CD8-positive, alpha-beta T cell (primary cell): ENCODE measurements at regions of chr16 and their contacts with region 1.

Region 1: DNA sequence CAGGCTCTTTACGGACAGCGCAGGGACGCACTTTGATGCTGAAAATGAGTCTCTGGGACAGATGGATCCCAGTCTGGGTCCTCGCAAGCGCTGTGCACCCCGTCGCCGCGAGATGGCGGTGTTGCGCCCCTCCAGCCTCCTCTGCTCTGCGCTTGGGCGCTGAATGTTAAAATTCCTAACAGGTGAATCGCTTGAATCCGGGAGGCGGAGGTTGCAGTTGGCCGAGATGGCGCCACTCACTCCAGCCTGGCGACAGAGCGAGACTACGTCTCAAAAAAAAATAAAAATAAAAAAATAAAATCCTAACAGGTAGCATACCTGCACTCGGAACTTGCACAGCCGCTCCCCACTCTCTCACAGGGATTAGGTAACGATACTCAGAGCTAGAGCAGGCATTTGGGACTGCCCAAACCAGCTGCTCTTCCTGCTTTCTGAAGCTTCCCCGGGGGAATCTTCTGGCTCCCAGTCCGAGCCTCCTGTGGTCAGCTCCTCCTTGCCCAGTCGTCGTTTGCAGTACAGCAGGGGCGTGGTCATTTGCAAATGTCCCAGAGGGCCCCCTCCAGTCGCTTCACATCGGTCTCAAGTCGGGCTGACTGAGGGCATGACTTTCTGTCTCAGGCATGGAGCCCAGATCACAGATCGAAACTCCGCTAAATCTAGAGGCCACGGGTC is 26.2 kb upstream of the OSGIN1 start:
- DNase-seq: peak; percentile 28 to 70 (median 56)
- ATAC-seq: peak; percentile 72
- H3K4me3 ChIP-seq: no peak overlapping the region
- H3K4me3 Mint-ChIP-seq: no peak overlapping the region
- H3K27ac ChIP-seq: no peak overlapping the region
- H3K27ac Mint-ChIP-seq: no peak overlapping the region
- H3K4me1 ChIP-seq: no peaks in the 10 kb centered on the region
- H3K4me1 Mint-ChIP-seq: peaks cover 4% of the 10 kb centered on the region
- H3K27me3 ChIP-seq: no peaks in the 10 kb centered on the region
- H3K27me3 Mint-ChIP-seq: no peaks in the 10 kb centered on the region
- CTCF ChIP-seq: peak; percentile 87

Region 2: GRCh38 chr16:83913245-83913633 is 13.6 kb before region 1 on chr16:
- CTCF ChIA-PET with region 1: interaction called, 12 read pairs
- POLR2A ChIA-PET with region 1: no interaction called
- intact Hi-C with region 1: no loop called
- DNase-seq: no peak
- ATAC-seq: no peak
- H3K4me3 ChIP-seq: no peak overlapping the region
- H3K4me3 Mint-ChIP-seq: no peak overlapping the region
- H3K27ac ChIP-seq: no peak overlapping the region
- H3K27ac Mint-ChIP-seq: no peak overlapping the region
- H3K4me1 ChIP-seq: no peaks in the 10 kb centered on the region
- H3K4me1 Mint-ChIP-seq: no peaks in the 10 kb centered on the region
- H3K27me3 ChIP-seq: no peaks in the 10 kb centered on the region
- H3K27me3 Mint-ChIP-seq: no peaks in the 10 kb centered on the region
- CTCF ChIP-seq: no peak

Region 3: DNA sequence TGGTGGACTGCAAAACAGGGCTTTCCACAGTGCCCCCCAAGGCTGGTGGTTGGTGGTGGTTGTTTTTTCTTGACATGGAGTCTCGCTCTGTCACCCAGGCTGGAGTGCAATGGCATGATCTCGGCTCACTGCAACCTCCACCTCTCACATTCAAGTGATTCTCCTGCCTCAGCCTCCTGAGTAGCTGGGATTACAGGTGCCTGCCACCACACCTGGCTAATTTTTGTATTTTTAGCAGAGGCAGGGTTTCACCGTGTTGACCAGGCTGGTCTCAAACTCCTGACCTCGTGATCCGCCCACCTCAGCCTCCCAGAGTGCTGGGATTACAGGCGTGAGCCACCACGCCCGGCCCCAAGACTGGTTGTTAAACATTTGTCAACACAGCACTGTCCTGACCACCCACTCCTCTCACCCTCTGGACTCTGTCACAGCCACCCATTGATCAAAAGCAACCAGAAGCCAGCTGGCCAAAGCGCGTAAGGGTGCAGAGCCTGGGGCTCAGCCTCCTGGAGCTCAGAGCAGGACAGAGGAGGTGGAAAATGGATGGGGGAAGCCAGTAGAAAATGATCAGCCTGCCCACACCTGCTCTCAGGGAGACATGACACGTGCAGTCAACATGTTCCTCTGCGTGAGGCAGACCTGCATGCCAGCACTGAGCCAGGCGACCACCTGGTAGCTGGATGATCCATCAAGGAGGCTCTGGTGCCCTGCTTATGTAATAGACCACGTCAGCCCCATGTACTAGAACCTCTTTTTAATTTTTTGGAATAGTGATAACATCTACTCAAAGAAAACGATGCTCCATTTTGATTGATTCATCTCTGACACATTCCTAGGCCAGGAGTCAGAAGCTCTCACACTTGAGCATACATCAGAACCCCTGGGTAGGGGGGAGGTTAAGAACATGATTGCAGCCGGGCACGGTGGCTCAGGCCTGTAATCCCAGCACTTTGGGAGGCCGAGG is 11.3 kb after region 1 on chr16:
- CTCF ChIA-PET with region 1: interaction called, 11 read pairs
- POLR2A ChIA-PET with region 1: no interaction called
- intact Hi-C with region 1: no loop called
- DNase-seq: no peak
- ATAC-seq: no peak
- H3K4me3 ChIP-seq: no peak overlapping the region
- H3K4me3 Mint-ChIP-seq: no peak overlapping the region
- H3K27ac ChIP-seq: no peak overlapping the region
- H3K27ac Mint-ChIP-seq: no peak overlapping the region
- H3K4me1 ChIP-seq: no peaks in the 10 kb centered on the region
- H3K4me1 Mint-ChIP-seq: peaks cover 4% of the 10 kb centered on the region
- H3K27me3 ChIP-seq: no peaks in the 10 kb centered on the region
- H3K27me3 Mint-ChIP-seq: no peaks in the 10 kb centered on the region
- CTCF ChIP-seq: no peak